Activated CD4-positive, alpha-beta T cell treated with anti-CD3 and anti-CD28 coated beads, Interleukin-2, amount 10 ng/mL, durations not matched to agents 24 days and 14 days (primary cell): ENCODE measurements at regions of chr20 and their contacts with region 1.

Region 1: DNA sequence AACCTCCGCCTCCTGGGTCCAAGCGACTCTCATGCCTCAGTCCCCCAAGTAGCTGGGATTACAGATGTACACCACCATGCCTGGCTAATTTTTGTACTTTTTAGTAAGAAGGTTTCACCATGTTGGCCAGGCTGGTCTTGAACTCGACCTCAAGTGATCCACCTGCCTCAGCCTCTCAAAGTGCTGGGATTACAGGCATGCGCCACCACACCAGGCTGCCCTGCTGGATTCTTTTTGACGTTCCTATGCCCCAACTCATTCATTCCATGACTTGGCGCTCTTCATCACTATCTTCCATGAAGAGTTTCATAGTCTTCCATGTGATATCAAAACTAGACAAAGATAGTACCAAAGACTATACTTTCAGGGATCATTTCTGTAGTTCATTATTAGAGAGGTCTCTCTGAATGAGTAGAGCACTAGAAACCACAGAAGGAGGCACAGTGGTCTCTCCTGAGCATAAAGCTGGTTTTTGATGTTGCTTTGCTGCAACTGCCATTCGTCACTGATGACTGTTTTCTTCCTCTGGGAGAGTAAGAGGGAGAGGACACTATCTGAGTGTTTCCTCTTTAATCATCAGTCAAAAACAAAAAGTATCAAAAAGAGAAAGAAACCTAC is 23.5 kb downstream of the DNAAF9 start:
- DNase-seq: no peak
- H3K4me3 Mint-ChIP-seq: no peak overlapping the region
- H3K27ac Mint-ChIP-seq: peak overlapping the region; percentile 72
- H3K4me1 Mint-ChIP-seq: peaks cover 12% of the 10 kb centered on the region
- H3K27me3 Mint-ChIP-seq: peaks cover 7% of the 10 kb centered on the region

Region 2: GRCh38 chr20:3350422-3350821 is 33.6 kb before region 1 on chr20:
- intact Hi-C with region 1: no loop called
- DNase-seq: no peak
- H3K4me3 Mint-ChIP-seq: no peak overlapping the region
- H3K27ac Mint-ChIP-seq: no peak overlapping the region
- H3K4me1 Mint-ChIP-seq: no peaks in the 10 kb centered on the region
- H3K27me3 Mint-ChIP-seq: peaks cover 2% of the 10 kb centered on the region

Region 3: DNA sequence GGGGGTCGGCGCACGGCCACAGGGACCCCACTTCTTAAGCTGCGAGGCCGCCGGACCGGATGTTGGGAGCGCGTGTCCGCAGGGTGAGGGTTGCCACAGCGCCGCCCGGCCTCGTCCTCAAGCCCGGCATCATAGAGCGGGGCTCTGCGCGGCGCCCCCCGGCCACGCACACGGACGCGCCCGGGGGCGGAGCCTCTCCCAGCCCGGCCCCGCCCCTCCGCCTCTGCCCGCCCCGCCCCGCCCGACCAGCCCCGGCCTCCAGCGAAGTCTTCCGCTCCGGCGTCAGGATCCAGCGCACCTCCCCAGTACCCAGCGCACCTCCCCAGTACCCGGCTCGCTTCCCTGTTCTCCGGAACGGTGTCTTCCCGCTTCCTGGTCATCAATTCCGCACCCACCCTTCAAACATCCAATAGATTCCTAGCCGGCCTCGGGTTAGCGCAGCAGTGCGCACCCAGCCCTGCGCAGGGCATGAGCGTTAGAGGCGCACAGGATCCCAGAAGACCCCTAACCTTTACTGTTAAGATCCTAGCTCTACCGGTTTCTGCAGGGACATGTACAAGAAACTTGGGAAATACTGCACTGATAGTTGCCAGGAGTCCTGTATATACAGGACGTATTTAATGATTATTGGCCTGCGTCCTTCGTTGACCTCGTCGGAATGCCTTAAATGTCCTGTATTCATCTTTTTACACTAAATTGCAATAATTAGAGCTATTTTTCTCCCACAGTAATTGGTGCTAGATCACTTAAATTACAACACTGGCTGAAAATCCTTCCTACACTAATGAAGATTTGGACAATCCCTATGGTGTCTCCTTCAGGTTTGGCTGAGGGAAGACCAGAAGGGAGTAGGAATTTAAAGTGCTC is 24.0 kb after region 1 on chr20:
- intact Hi-C with region 1: loop called (anchors 2 kb)
- DNase-seq: peak; percentile 91
- H3K4me3 Mint-ChIP-seq: peak overlapping the region; percentile 91
- H3K27ac Mint-ChIP-seq: peak overlapping the region; percentile 90
- H3K4me1 Mint-ChIP-seq: peaks cover 30% of the 10 kb centered on the region
- H3K27me3 Mint-ChIP-seq: peaks cover 41% of the 10 kb centered on the region